B cell (primary cell): ENCODE measurements at regions of chr3 and their contacts with region 1.

Region 1: GRCh38 chr3:120417272-120417911 is 33.4 kb downstream of the FSTL1 start:
- DNase-seq: peak; percentile 92
- ATAC-seq: peak; percentile 100
- H3K4me3 ChIP-seq: peak overlapping the region; percentile 39 to 76 (median 54)
- H3K4me3 Mint-ChIP-seq: peak overlapping the region; percentile 82
- H3K27ac ChIP-seq: no peak overlapping the region
- H3K27ac Mint-ChIP-seq: peak overlapping the region; percentile 2
- H3K4me1 ChIP-seq: peaks cover 7 to 14% of the 10 kb centered on the region in 2 donors
- H3K4me1 Mint-ChIP-seq: peaks cover 21% of the 10 kb centered on the region
- H3K27me3 ChIP-seq: no peaks in the 10 kb centered on the region
- H3K27me3 Mint-ChIP-seq: no peaks in the 10 kb centered on the region
- CTCF ChIP-seq: peak; percentile 86

Region 2: GRCh38 chr3:119819806-119820205 is 597.6 kb before region 1 on chr3:
- CTCF ChIA-PET with region 1: interaction called, 3 read pairs
- POLR2A ChIA-PET with region 1: no interaction called
- intact Hi-C with region 1: loop called (anchors 10 kb)
- DNase-seq: no peak
- ATAC-seq: no peak
- H3K4me3 ChIP-seq: no peak overlapping the region
- H3K4me3 Mint-ChIP-seq: no peak overlapping the region
- H3K27ac ChIP-seq: no peak overlapping the region
- H3K27ac Mint-ChIP-seq: no peak overlapping the region
- H3K4me1 ChIP-seq: no peaks in the 10 kb centered on the region
- H3K4me1 Mint-ChIP-seq: no peaks in the 10 kb centered on the region
- H3K27me3 ChIP-seq: peaks cover 0 to 2% (median 0%) of the 10 kb centered on the region in 4 experiments
- H3K27me3 Mint-ChIP-seq: no peaks in the 10 kb centered on the region
- CTCF ChIP-seq: no peak

Region 3: DNA sequence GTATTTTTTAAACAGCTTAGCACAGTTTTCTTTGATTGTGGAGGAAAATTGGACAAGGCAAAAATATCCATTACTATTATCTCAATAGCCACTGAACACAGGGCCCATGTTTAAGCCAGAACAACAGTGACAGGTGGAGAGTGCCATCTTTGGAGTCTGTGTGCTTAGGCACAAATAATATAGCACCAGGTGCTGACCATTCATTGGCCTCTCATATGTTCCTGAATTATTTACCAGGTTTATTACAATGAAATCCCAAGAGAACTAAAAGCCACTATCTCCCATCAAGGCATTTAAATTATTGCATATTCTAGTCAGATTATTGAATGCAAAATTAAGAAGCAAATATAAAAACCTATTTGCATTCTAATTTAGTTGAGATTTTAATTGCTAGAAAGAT is 172.0 kb before region 1 on chr3:
- CTCF ChIA-PET with region 1: interaction called, 116 read pairs
- POLR2A ChIA-PET with region 1: no interaction called
- intact Hi-C with region 1: no loop called
- DNase-seq: no peak
- ATAC-seq: no peak
- H3K4me3 ChIP-seq: no peak overlapping the region
- H3K4me3 Mint-ChIP-seq: no peak overlapping the region
- H3K27ac ChIP-seq: no peak overlapping the region
- H3K27ac Mint-ChIP-seq: no peak overlapping the region
- H3K4me1 ChIP-seq: no peaks in the 10 kb centered on the region
- H3K4me1 Mint-ChIP-seq: no peaks in the 10 kb centered on the region
- H3K27me3 ChIP-seq: peaks cover 0 to 8% (median 5%) of the 10 kb centered on the region in 4 experiments
- H3K27me3 Mint-ChIP-seq: peaks cover 41% of the 10 kb centered on the region
- CTCF ChIP-seq: no peak

Region 4: DNA sequence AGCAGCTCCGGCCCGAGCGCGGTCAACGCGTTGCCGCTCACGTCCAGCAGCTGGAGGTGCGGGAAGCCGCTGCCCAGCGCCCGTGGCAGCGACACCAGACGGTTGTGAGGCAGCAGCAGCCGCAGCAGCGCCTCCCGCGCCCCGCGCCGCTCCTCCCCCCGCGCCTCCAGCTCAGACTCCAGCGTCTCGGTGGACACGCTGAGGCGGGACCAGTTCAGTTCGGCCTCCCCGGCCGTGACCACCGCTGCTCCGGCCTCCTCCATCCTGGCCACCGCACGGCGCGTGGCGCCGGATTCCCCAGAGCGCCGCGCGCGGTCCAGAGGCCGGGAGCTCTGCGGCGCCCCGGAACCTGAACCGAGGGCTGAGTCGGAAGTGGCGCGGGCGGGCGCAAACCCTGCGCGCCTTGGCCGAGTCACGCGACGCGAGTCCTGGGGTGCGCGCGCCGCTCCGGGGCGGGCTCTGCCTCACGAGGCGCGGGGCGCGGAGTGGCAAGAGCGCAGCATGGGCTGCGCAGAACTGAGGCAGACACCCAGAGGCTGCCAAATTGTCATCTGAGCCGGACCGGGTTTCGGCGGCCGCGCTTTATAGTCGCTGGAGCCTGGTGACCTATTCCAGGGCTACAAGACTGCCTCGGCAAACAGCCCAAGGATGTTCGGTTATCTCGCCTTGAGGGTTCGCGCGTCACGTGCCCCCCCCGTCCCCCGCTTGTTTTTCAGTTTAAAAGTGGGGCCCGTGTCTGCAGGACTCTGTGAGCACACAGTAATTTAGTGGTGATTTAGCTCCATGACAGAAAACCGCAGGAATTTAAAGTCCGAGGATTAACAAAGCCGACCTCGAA is 68.2 kb before region 1 on chr3 and contains the start of gene LRRC58:
- CTCF ChIA-PET with region 1: interaction called, 23 read pairs
- POLR2A ChIA-PET with region 1: no interaction called
- intact Hi-C with region 1: loop called (anchors 1 kb)
- DNase-seq: peak; percentile 95
- ATAC-seq: peak; percentile 89
- H3K4me3 ChIP-seq: peak within 1 kb of the TSS; percentile 61 to 99 (median 88)
- H3K4me3 Mint-ChIP-seq: peak within 1 kb of the TSS; percentile 95
- H3K27ac ChIP-seq: peak within 1 kb of the TSS; percentile 63 to 85
- H3K27ac Mint-ChIP-seq: peak within 1 kb of the TSS; percentile 94
- H3K4me1 ChIP-seq: peaks cover 14 to 17% of the 10 kb centered on the region in 2 donors
- H3K4me1 Mint-ChIP-seq: peaks cover 41% of the 10 kb centered on the region
- H3K27me3 ChIP-seq: peaks cover 0 to 10% (median 0%) of the 10 kb centered on the region in 4 experiments
- H3K27me3 Mint-ChIP-seq: no peaks in the 10 kb centered on the region
- CTCF ChIP-seq: peak; percentile 25
- total RNA-seq, gene LRRC58: 16.7 TPM in 2 replicates

Region 5: DNA sequence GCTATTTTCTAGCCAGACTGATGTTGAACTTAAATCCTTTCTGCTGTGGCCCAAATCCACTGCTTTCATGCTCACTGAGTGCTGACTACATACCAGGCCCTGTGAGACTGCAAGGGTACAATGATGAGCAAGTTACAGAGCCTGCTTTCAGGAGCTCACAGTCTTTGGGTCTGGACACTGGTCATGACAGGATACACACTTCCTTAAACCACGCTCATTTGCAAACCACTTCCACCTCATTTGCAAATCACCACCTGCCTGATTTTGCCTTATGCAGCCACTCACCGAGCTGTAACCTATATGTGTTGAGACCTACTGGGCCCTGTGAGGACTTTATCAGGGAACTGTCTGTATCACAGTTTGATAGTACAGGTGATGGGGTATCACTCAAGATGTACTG is 18.0 kb before region 1 on chr3:
- CTCF ChIA-PET with region 1: interaction called, 20 read pairs
- POLR2A ChIA-PET with region 1: no interaction called
- intact Hi-C with region 1: no loop called
- DNase-seq: peak; percentile 25
- ATAC-seq: peak; percentile 43
- H3K4me3 ChIP-seq: peak overlapping the region in 1 of 5 experiments; percentile 1
- H3K4me3 Mint-ChIP-seq: peak overlapping the region; percentile 42
- H3K27ac ChIP-seq: no peak overlapping the region
- H3K27ac Mint-ChIP-seq: no peak overlapping the region
- H3K4me1 ChIP-seq: peaks cover 13 to 14% of the 10 kb centered on the region in 2 donors
- H3K4me1 Mint-ChIP-seq: peaks cover 38% of the 10 kb centered on the region
- H3K27me3 ChIP-seq: no peaks in the 10 kb centered on the region
- H3K27me3 Mint-ChIP-seq: no peaks in the 10 kb centered on the region
- CTCF ChIP-seq: no peak

Region 6: GRCh38 chr3:120596116-120596852 is 178.9 kb after region 1 on chr3 and contains the start of gene NDUFB4:
- CTCF ChIA-PET with region 1: interaction called, 7 read pairs
- POLR2A ChIA-PET with region 1: no interaction called
- intact Hi-C with region 1: loop called (anchors 1 kb)
- DNase-seq: peak; percentile 97
- ATAC-seq: peak; percentile 97
- H3K4me3 ChIP-seq: peak within 1 kb of the TSS; percentile 59 to 94 (median 86)
- H3K4me3 Mint-ChIP-seq: peak within 1 kb of the TSS; percentile 92
- H3K27ac ChIP-seq: peak within 1 kb of the TSS; percentile 72 to 95
- H3K27ac Mint-ChIP-seq: peak within 1 kb of the TSS; percentile 96
- H3K4me1 ChIP-seq: peaks cover 15 to 19% of the 10 kb centered on the region in 2 donors
- H3K4me1 Mint-ChIP-seq: peaks cover 11% of the 10 kb centered on the region
- H3K27me3 ChIP-seq: no peaks in the 10 kb centered on the region
- H3K27me3 Mint-ChIP-seq: no peaks in the 10 kb centered on the region
- CTCF ChIP-seq: no peak
- total RNA-seq, gene NDUFB4: 58.1 and 68.4 TPM in 2 replicates